Left cardiac atrium (tissue), 4 donors: ENCODE measurements at regions of chr5 and their contacts with region 1.

Region 1: GRCh38 chr5:38441453-38442246 is 114.8 kb downstream of the LIFR start:
- DNase-seq: peak; percentile 88
- ATAC-seq: peak; percentile 91 to 95

Region 2: GRCh38 chr5:38666668-38667498 is 225.2 kb after region 1 on chr5:
- intact Hi-C with region 1: loop called (anchors 2 to 5 kb)
- DNase-seq: peak; percentile 49
- ATAC-seq: peak; percentile 94 to 96